ENCODE measurements at regions of chr3 and their contacts with region 1.

Region 1: DNA sequence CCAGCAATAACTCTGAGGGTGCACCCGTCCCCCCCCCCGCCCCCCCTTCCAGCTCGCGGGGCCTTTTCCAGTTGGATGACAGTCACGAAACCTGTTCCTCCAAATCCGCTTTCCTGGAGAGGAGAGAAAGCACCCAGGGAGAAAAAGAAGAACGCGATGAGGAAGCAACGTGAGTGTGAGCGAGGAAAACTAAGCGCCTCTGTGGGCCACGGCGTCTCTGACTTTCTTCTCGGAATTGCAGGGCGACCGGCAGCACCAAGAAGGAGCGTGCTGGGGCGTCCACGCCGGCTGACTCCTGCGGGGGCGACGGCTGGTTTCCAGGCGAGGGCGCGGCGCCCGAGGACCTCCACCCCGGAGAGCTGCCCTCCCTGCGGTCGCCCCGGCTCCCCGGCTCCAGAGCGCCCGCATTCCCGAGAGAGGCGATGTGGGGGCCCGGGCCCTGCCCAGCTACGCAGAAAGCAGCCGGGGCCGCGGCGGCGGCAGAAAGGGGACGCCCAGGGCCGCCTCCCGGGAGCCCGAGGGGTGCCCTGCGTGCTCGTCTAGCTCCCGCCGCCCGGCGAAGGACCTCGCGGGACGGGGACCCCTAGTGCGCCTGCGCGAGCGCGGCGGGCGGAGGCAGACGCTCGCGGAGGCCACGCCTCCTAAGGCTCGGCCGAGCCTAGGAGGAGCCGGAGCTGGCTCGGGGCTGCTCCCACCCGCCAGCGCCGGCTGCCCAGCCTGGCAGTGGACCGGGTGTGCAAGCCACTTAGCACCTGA is 15.4 kb upstream of the ADIPOQ start:
- H3K4me3 Mint-ChIP-seq: peak overlapping the region; percentile 96
- H3K27ac Mint-ChIP-seq: peak overlapping the region; percentile 96
- H3K4me1 Mint-ChIP-seq: peaks cover 64% of the 10 kb centered on the region
- H3K27me3 Mint-ChIP-seq: peaks cover 52% of the 10 kb centered on the region

Region 2: DNA sequence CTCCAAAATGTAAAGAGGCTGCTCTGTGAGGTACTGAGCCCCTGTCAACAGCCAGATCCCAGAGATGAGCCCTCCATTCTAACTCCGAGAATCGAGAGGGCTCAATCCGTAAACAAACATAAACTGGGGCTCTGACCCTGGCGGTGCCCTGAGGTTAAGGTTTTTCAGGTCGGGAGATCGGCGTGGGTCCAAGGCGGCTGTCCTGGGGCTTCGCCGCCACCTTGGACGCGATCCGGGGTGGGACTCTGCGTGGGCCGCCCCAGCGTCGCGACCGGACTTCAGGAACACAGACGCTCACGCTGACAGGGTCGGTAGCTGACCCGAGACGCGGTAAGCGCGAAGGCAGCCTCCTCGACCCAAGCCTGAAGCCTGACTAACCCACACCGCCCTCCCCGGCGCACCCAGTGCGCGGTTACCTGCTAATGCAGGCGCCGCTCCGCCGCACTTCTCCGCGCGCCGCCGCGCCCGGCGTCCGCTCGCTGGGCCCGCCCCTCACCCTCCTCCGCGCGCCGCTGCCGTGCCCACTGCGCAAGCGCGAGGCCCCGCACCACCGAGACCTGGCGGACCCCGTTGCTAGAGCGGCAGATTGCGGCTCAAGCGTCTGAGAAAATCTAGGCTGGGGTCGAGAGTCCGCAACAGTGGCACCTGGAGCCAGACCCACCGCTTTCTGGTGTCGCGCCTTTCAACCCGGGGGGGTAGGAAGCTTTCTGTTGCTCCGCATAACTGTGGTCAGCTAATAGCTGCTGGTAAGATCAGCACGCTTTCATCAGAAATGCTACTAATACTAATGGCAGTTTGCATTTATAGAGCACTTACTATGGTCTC is 260.1 kb before region 1 on chr3 and contains the start of gene TBCCD1:
- intact Hi-C with region 1: no loop called
- H3K4me3 Mint-ChIP-seq: peak within 1 kb of the TSS; percentile 87
- H3K27ac Mint-ChIP-seq: peak within 1 kb of the TSS; percentile 89
- H3K4me1 Mint-ChIP-seq: peaks cover 54% of the 10 kb centered on the region
- H3K27me3 Mint-ChIP-seq: no peaks in the 10 kb centered on the region

Region 3: GRCh38 chr3:186806089-186807055 is 20.8 kb before region 1 on chr3 and contains the start of gene RFC4:
- intact Hi-C with region 1: loop called (anchors 2 kb)
- H3K4me3 Mint-ChIP-seq: peak within 1 kb of the TSS; percentile 77
- H3K27ac Mint-ChIP-seq: peak within 1 kb of the TSS; percentile 77
- H3K4me1 Mint-ChIP-seq: peaks cover 8% of the 10 kb centered on the region
- H3K27me3 Mint-ChIP-seq: no peaks in the 10 kb centered on the region

Region 4: DNA sequence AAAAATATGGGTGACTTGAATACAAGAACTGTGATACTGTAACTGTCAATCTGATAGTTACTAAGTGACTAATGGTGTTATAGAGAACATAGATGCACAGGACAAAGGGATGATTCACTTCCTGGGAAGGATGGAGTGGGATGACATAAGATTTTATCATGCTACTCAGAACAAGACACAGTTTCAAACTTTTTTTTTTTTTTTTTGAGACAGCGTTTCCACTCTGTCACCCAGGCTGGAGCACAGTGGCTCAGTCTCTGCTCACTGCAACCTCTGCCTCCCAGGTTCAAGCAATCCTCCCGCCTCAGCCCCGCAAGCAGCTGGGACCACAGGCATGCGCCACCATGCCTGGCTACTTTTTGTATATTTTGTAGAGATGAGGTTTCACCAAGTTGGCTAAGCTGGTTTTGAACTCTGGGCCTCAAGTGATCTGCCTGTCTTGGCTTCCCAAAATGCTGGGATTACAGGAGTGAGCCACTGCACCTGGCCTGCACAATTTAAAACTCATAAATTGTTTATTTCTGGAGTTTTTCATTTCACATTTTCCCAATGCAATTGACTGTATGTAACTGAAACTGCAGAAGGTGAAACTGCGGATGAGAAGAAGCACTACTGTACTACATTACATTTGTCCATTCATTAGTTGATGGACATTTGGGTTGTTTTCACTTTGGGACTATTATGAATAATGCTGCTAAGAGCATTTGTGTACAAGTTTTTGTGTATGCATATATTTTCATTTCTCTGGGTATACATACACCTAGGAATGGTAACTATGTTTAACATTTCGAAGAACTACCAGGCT is 55.9 kb after region 1 on chr3:
- intact Hi-C with region 1: no loop called
- H3K4me3 Mint-ChIP-seq: no peak overlapping the region
- H3K27ac Mint-ChIP-seq: no peak overlapping the region
- H3K4me1 Mint-ChIP-seq: peaks cover 29% of the 10 kb centered on the region
- H3K27me3 Mint-ChIP-seq: peaks cover 3% of the 10 kb centered on the region

Region 5: GRCh38 chr3:186930641-186931531 is 103.7 kb after region 1 on chr3:
- intact Hi-C with region 1: loop called (anchors 1 kb)
- H3K4me3 Mint-ChIP-seq: peak overlapping the region; percentile 96
- H3K27ac Mint-ChIP-seq: peak overlapping the region; percentile 85
- H3K4me1 Mint-ChIP-seq: peaks cover 57% of the 10 kb centered on the region
- H3K27me3 Mint-ChIP-seq: peaks cover 2% of the 10 kb centered on the region